CD4-positive, alpha-beta memory T cell (primary cell): ENCODE measurements at regions of chr5 and their contacts with region 1.

Region 1: GRCh38 chr5:39217365-39218281 is 1.7 kb downstream of the FYB1 start:
- DNase-seq: peak; percentile 83 to 86 (median 84)
- H3K4me3 ChIP-seq: peak overlapping the region; percentile 33 to 64
- H3K4me3 Mint-ChIP-seq: peak overlapping the region; percentile 80 to 90 (median 86)
- H3K27ac ChIP-seq: peak overlapping the region; percentile 62
- H3K27ac Mint-ChIP-seq: peak overlapping the region; percentile 87 to 96 (median 93)
- H3K4me1 ChIP-seq: peaks cover 68% of the 10 kb centered on the region
- H3K4me1 Mint-ChIP-seq: peaks cover 54 to 71% (median 65%) of the 10 kb centered on the region in 4 donors
- H3K27me3 ChIP-seq: no peaks in the 10 kb centered on the region
- H3K27me3 Mint-ChIP-seq: no peaks in the 10 kb centered on the region

Region 2: GRCh38 chr5:39074016-39074886 is 143.4 kb before region 1 on chr5 and contains the start of gene RICTOR:
- CTCF ChIA-PET with region 1: interaction called, 8 read pairs
- POLR2A ChIA-PET with region 1: interaction called, 14 read pairs
- intact Hi-C with region 1: loop called (anchors 5 kb)
- DNase-seq: peak; percentile 87 to 90 (median 89)
- H3K4me3 ChIP-seq: peak within 1 kb of the TSS; percentile 50 to 56
- H3K4me3 Mint-ChIP-seq: peak within 1 kb of the TSS; percentile 97 to 99 (median 98)
- H3K27ac ChIP-seq: peak within 1 kb of the TSS; percentile 97
- H3K27ac Mint-ChIP-seq: peak within 1 kb of the TSS; percentile 96 to 99 (median 98)
- H3K4me1 ChIP-seq: peaks cover 46% of the 10 kb centered on the region
- H3K4me1 Mint-ChIP-seq: peaks cover 25 to 59% (median 39%) of the 10 kb centered on the region in 4 donors
- H3K27me3 ChIP-seq: peaks cover 22% of the 10 kb centered on the region
- H3K27me3 Mint-ChIP-seq: peaks cover 14 to 18% of the 10 kb centered on the region in 2 donors
- total RNA-seq, gene RICTOR: 85.0 to 94.9 TPM

Region 3: GRCh38 chr5:39148983-39149534 is 68.6 kb before region 1 on chr5:
- CTCF ChIA-PET with region 1: interaction called, 132 read pairs
- POLR2A ChIA-PET with region 1: interaction called, 30 read pairs
- intact Hi-C with region 1: loop called (anchors 1 kb)
- DNase-seq: peak in 4 of 5 donors; percentile 43 to 59 (median 56)
- H3K4me3 ChIP-seq: no peak overlapping the region
- H3K4me3 Mint-ChIP-seq: peak overlapping the region in 4 of 8 donors; percentile 2 to 36 (median 27)
- H3K27ac ChIP-seq: no peak overlapping the region
- H3K27ac Mint-ChIP-seq: peak overlapping the region; percentile 62 to 94 (median 86)
- H3K4me1 ChIP-seq: peaks cover 84% of the 10 kb centered on the region
- H3K4me1 Mint-ChIP-seq: peaks cover 59 to 87% (median 71%) of the 10 kb centered on the region in 4 donors
- H3K27me3 ChIP-seq: no peaks in the 10 kb centered on the region
- H3K27me3 Mint-ChIP-seq: no peaks in the 10 kb centered on the region

Region 4: GRCh38 chr5:39187831-39188731 is 29.5 kb before region 1 on chr5:
- CTCF ChIA-PET with region 1: interaction called, 313 read pairs
- POLR2A ChIA-PET with region 1: interaction called, 1,810 read pairs
- intact Hi-C with region 1: loop called (anchors 1 kb)
- DNase-seq: peak in 2 of 5 donors; percentile 58 to 70
- H3K4me3 ChIP-seq: peak overlapping the region in 1 of 2 donors; percentile 9
- H3K4me3 Mint-ChIP-seq: peak overlapping the region; percentile 84 to 96 (median 90)
- H3K27ac ChIP-seq: peak overlapping the region; percentile 59
- H3K27ac Mint-ChIP-seq: peak overlapping the region; percentile 95 to 99 (median 99)
- H3K4me1 ChIP-seq: peaks cover 98% of the 10 kb centered on the region
- H3K4me1 Mint-ChIP-seq: peaks cover 71 to 96% (median 83%) of the 10 kb centered on the region in 4 donors
- H3K27me3 ChIP-seq: no peaks in the 10 kb centered on the region
- H3K27me3 Mint-ChIP-seq: no peaks in the 10 kb centered on the region

Region 5: DNA sequence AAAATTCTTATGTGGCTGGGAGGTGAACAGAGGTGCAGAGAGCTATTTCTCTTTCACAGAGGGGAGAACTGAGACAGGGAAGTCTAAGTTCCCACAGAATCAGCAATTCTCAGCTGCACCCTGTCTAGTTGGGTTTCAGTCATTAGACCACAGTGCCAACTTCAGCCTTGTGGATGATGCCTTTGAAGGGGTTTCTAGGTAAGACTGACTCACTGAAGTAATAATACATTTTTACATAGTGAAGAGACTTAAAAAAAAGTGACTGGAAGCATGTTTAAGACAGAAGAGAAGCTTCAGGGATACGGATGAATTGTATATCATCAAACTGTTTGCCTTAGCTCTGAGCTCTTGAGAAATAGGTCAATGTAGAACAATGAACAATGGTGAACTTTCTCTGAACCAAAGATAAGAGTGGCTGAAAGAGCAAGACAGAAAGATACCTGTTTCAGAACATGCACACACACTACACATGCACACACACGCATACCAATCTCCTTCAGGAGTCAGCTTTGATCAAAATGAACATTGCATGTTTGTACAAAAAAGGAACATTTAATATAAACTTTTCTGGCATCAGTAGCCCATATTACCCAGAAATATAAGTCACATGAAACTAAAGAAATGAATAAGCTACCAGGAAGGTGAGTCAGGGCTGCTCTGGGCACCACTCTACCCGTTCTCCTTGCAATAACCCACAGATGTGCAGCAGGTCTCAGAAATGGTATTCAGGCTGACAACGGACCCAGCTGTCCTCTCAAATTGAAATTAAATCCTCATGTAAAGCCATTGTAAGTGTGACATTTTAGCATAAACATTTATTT is 14.3 kb after region 1 on chr5:
- CTCF ChIA-PET with region 1: interaction called, 32 read pairs
- POLR2A ChIA-PET with region 1: interaction called, 6 read pairs
- intact Hi-C with region 1: no loop called
- DNase-seq: peak in 1 of 5 donors; percentile 51
- H3K4me3 ChIP-seq: no peak overlapping the region
- H3K4me3 Mint-ChIP-seq: peak overlapping the region in 3 of 8 donors; percentile 18 to 56 (median 45)
- H3K27ac ChIP-seq: no peak overlapping the region
- H3K27ac Mint-ChIP-seq: peak overlapping the region in 4 of 7 donors; percentile 8 to 86 (median 56)
- H3K4me1 ChIP-seq: peaks cover 12% of the 10 kb centered on the region
- H3K4me1 Mint-ChIP-seq: peaks cover 8 to 11% (median 10%) of the 10 kb centered on the region in 4 donors
- H3K27me3 ChIP-seq: no peaks in the 10 kb centered on the region
- H3K27me3 Mint-ChIP-seq: no peaks in the 10 kb centered on the region

Region 6: DNA sequence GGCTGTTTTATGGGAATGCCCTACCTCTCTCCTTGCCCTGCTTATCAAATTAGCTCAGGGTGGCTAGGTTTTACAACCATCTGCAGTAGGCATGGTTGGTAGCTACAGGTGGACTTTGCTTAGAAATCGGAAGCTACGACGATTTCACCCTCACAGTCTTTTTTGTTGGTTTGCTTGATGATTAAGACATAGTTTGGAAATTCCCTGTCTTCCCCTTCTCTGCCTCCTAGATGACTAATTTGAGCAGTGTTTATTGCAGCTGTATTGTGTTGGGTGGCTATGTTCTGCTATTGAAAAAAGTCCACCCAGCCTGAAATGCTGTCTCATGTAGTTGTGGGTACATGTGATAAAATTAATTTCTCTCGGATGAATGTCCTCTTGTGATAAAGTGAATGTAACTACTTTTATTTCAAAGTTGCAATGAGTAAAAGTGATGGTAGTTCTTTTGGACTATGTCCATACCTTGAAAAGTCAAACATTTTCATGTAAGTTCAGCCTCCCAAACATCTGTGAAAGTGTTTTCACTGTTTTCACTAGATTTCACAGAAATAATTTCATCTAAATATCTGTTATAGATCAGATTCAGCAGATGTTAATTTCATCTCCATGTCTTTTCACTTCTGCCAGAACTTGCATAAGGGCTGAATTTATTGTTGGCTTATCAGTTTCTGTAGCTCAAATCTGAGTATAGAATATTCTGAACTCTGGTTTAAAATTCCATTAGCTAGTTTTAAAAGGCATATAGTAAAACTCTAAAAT is 39.0 kb after region 1 on chr5:
- CTCF ChIA-PET with region 1: interaction called, 16 read pairs
- POLR2A ChIA-PET with region 1: interaction called, 3 read pairs
- intact Hi-C with region 1: no loop called
- DNase-seq: peak in 1 of 5 donors; percentile 4
- H3K4me3 ChIP-seq: peak overlapping the region in 1 of 2 donors; percentile 3
- H3K4me3 Mint-ChIP-seq: peak overlapping the region; percentile 41 to 73 (median 62)
- H3K27ac ChIP-seq: no peak overlapping the region
- H3K27ac Mint-ChIP-seq: peak overlapping the region in 3 of 7 donors; percentile 46 to 80 (median 64)
- H3K4me1 ChIP-seq: peaks cover 11% of the 10 kb centered on the region
- H3K4me1 Mint-ChIP-seq: peaks cover 9 to 16% (median 13%) of the 10 kb centered on the region in 4 donors
- H3K27me3 ChIP-seq: no peaks in the 10 kb centered on the region
- H3K27me3 Mint-ChIP-seq: no peaks in the 10 kb centered on the region

Region 7: DNA sequence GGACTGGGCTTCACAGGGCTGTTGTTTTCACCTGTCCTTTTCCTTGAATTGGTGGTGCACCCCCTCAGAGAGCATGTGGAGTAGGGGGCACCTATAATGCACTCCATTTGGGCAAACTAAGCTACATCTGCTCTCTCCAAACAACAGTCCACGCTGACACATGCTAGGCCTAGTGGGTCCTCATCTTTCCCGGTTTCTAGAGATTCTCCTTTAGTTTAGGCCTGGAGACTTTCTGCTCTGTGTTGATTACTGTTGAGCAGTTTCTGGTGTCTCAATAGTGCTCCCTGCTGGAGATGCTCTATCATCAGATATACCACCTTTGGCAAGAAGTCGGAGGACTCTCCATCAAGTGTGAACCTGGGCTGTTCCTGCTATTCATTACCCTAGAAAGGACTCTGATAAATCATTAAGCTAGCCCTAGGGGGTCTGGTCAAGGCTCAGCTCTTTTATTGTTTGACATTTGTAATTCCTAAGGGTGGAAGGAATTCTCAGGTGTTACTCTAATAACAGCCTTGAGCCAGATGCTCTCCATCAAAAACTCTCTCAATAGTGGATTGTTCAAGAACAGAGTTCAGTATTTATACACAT is 65.7 kb after region 1 on chr5:
- CTCF ChIA-PET with region 1: interaction called, 221 read pairs
- POLR2A ChIA-PET with region 1: interaction called, 60 read pairs
- intact Hi-C with region 1: loop called (anchors 1 kb)
- DNase-seq: peak; percentile 77 to 81 (median 79)
- H3K4me3 ChIP-seq: no peak overlapping the region
- H3K4me3 Mint-ChIP-seq: peak overlapping the region in 5 of 8 donors; percentile 7 to 70 (median 10)
- H3K27ac ChIP-seq: no peak overlapping the region
- H3K27ac Mint-ChIP-seq: peak overlapping the region; percentile 16 to 96 (median 58)
- H3K4me1 ChIP-seq: peaks cover 13% of the 10 kb centered on the region
- H3K4me1 Mint-ChIP-seq: peaks cover 11 to 43% (median 28%) of the 10 kb centered on the region in 4 donors
- H3K27me3 ChIP-seq: no peaks in the 10 kb centered on the region
- H3K27me3 Mint-ChIP-seq: peaks cover 5 to 7% of the 10 kb centered on the region in 2 donors